ENCODE measurements at regions of chr13 and their contacts with region 1.

Region 1: GRCh38 chr13:102596147-102597028 is at the start of gene TPP2:
- DNase-seq: peak; percentile 96 to 99
- H3K4me3 ChIP-seq: peak within 1 kb of the TSS; percentile 67 to 81
- H3K27ac ChIP-seq: peak within 1 kb of the TSS; percentile 88 to 99
- H3K4me1 ChIP-seq: peaks cover 3 to 18% of the 10 kb centered on the region in 2 donors
- H3K27me3 ChIP-seq: no peaks in the 10 kb centered on the region
- CTCF ChIP-seq: no peak
- total RNA-seq, gene TPP2: 21.4 TPM

Region 2: DNA sequence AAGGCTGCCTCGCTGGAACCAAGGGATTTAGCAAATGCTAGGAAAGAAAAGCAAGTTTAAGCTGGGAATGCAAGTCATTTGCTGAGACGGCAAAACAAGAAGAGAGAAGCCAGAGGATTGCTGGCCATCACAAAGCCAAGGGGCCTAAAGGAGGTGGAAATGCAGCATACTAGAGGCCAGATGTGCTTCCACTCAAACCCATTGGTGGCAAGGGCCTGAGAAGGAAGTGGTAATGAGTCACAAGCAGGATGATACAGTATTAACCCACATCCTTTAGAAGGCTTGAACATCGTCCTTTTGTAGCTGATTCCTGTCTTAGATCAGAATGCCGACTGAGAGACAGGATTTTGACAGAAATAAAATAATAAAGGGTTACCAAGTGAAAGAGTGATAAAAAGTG is 1075.7 kb before region 1 on chr13:
- intact Hi-C with region 1: loop called (anchors 10 kb)
- DNase-seq: no peak
- H3K4me3 ChIP-seq: no peak overlapping the region
- H3K27ac ChIP-seq: peak overlapping the region; percentile 14 to 72
- H3K4me1 ChIP-seq: peaks cover 0 to 23% of the 10 kb centered on the region in 2 donors
- H3K27me3 ChIP-seq: no peaks in the 10 kb centered on the region
- CTCF ChIP-seq: no peak

Region 3: GRCh38 chr13:102394158-102395053 is 202.0 kb before region 1 on chr13:
- intact Hi-C with region 1: loop called (anchors 5 kb)
- DNase-seq: peak; percentile 58 to 95
- H3K4me3 ChIP-seq: peak overlapping the region; percentile 70 to 84
- H3K27ac ChIP-seq: peak overlapping the region; percentile 72 to 80
- H3K4me1 ChIP-seq: peaks cover 0 to 7% of the 10 kb centered on the region in 2 donors
- H3K27me3 ChIP-seq: no peaks in the 10 kb centered on the region
- CTCF ChIP-seq: no peak

Region 4: GRCh38 chr13:102758842-102759241 is 162.5 kb after region 1 on chr13:
- intact Hi-C with region 1: no loop called
- DNase-seq: no peak
- H3K4me3 ChIP-seq: no peak overlapping the region
- H3K27ac ChIP-seq: no peak overlapping the region
- H3K4me1 ChIP-seq: no peaks in the 10 kb centered on the region
- H3K27me3 ChIP-seq: no peaks in the 10 kb centered on the region
- CTCF ChIP-seq: no peak

Region 5: GRCh38 chr13:102773441-102774215 is 177.2 kb after region 1 on chr13 and contains the start of gene TEX30:
- intact Hi-C with region 1: loop called (anchors 2 kb)
- DNase-seq: peak; percentile 38 to 91
- H3K4me3 ChIP-seq: peak within 1 kb of the TSS; percentile 68 to 84
- H3K27ac ChIP-seq: peak within 1 kb of the TSS; percentile 82 to 87
- H3K4me1 ChIP-seq: peaks cover 4 to 9% of the 10 kb centered on the region in 2 donors
- H3K27me3 ChIP-seq: no peaks in the 10 kb centered on the region
- CTCF ChIP-seq: peak in 1 of 3 experiments; percentile 10
- total RNA-seq, gene TEX30: 1.4 TPM

Region 6: GRCh38 chr13:102800145-102801041 is 204.0 kb after region 1 on chr13:
- intact Hi-C with region 1: loop called (anchors 1 kb)
- DNase-seq: peak; percentile 27 to 87
- H3K4me3 ChIP-seq: peak overlapping the region; percentile 86 to 89
- H3K27ac ChIP-seq: peak overlapping the region; percentile 86
- H3K4me1 ChIP-seq: peaks cover 7% of the 10 kb centered on the region in 2 donors
- H3K27me3 ChIP-seq: no peaks in the 10 kb centered on the region
- CTCF ChIP-seq: peak; percentile 54 to 74 (median 62)

Region 7: GRCh38 chr13:102845630-102846260 is 249.4 kb after region 1 on chr13 and contains the start of gene ERCC5:
- intact Hi-C with region 1: loop called (anchors 1 kb)
- DNase-seq: peak; percentile 74 to 96
- H3K4me3 ChIP-seq: peak within 1 kb of the TSS; percentile 69 to 91
- H3K27ac ChIP-seq: peak within 1 kb of the TSS; percentile 95
- H3K4me1 ChIP-seq: peaks cover 0 to 4% of the 10 kb centered on the region in 2 donors
- H3K27me3 ChIP-seq: no peaks in the 10 kb centered on the region
- CTCF ChIP-seq: no peak
- total RNA-seq, gene ERCC5: 26.2 TPM

Measured in ascending aorta (tissue), 2 donors.